Transverse colon (tissue), 4 donors: ENCODE measurements at regions of chr4 and their contacts with region 1.

Region 1: DNA sequence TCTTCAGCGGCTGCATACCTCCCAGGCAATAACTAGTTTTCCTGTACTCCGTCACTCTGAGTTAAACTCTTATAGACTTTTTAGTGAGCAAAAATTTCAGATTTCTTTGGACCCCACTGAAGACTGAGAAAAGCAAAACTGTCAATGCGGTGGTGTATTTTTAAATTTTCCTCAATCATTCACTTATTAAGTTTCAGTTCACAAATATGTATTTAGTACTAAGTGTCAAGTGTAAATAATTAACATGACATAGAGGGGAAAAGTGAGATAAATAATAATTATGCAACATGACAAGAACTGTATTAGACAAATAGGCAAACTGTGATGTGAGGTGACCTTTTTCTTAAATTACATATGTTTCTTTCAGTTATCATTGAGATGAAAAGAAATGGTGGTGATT is 124.4 kb downstream of the NAF1 start:
- DNase-seq: no peak
- H3K4me3 ChIP-seq: no peak overlapping the region
- H3K27ac ChIP-seq: no peak overlapping the region
- H3K4me1 ChIP-seq: no peaks in the 10 kb centered on the region
- H3K27me3 ChIP-seq: no peaks in the 10 kb centered on the region
- CTCF ChIP-seq: no peak
- EP300 ChIP-seq: no peak
- POLR2A ChIP-seq: no peak

Region 2: GRCh38 chr4:162506253-162506652 is 536.1 kb before region 1 on chr4:
- in situ Hi-C with region 1: loop called in 2 of 4 experiments (anchors 10 to 25 kb)
- intact Hi-C with region 1: no loop called
- DNase-seq: no peak
- H3K4me3 ChIP-seq: no peak overlapping the region
- H3K27ac ChIP-seq: no peak overlapping the region
- H3K4me1 ChIP-seq: no peaks in the 10 kb centered on the region
- H3K27me3 ChIP-seq: no peaks in the 10 kb centered on the region
- CTCF ChIP-seq: no peak
- EP300 ChIP-seq: no peak
- POLR2A ChIP-seq: no peak

Region 3: DNA sequence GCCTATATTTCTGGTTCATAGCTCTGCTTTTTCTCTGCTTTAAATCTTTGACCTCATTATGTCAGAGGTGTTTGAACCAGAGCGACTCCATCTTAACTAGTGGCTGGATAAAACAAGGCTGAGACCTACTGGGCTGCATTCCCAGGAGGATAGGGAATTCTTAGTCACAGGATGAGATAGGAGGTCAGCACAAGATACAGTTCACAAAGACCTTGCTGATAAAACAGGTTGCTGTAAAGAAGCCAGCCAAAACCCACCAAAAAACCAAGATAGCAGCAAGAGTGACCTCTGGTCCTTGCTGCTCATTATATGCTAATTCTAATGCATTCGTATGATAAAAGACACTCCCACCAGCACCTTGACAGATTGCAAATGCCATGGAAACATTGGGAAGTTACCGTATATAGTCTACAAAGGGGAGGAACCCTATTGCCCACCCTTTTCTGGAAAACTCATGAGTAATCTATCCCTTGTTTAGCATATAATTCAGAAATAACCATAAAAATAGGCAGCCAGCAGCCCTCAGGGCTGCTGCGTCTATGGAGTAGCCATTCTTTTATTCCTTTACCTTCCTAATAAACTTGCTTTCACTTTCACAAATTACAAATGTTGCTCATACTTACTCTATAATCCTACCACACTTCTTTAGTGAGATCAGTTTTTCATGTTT is 69.5 kb before region 1 on chr4:
- in situ Hi-C with region 1: no loop called
- intact Hi-C with region 1: no loop called
- DNase-seq: no peak
- H3K4me3 ChIP-seq: no peak overlapping the region
- H3K27ac ChIP-seq: no peak overlapping the region
- H3K4me1 ChIP-seq: no peaks in the 10 kb centered on the region
- H3K27me3 ChIP-seq: no peaks in the 10 kb centered on the region
- CTCF ChIP-seq: no peak
- EP300 ChIP-seq: no peak
- POLR2A ChIP-seq: no peak

Region 4: DNA sequence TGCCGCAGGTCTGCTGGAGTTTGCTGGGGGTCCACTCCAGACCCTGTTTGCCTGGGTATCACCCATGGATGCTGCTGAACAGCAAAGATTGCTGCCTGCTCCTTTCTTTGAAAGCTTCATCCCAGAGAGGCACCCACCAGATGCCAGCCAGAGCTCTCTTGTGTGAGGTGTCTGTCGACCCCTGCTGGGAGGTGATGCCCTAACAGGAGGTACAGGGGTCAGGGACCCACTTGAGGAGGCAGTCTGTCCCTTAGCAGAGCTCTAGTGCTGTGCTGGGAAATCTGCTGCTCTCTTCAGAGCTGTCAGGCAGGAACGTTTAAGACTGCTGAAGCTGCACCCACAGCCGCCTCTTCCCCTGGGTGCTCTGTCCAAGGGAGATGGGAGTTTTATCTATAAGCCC is 38.3 kb before region 1 on chr4:
- in situ Hi-C with region 1: no loop called
- intact Hi-C with region 1: no loop called
- DNase-seq: no peak
- H3K4me3 ChIP-seq: no peak overlapping the region
- H3K27ac ChIP-seq: no peak overlapping the region
- H3K4me1 ChIP-seq: no peaks in the 10 kb centered on the region
- H3K27me3 ChIP-seq: no peaks in the 10 kb centered on the region
- CTCF ChIP-seq: no peak
- EP300 ChIP-seq: no peak
- POLR2A ChIP-seq: no peak